CD8-positive, alpha-beta T cell (primary cell): ENCODE measurements at regions of chr12 and their contacts with region 1.

Region 1: GRCh38 chr12:110888256-110888991 is 32.0 kb downstream of the MYL2 start:
- DNase-seq: no peak
- ATAC-seq: no peak
- H3K4me3 ChIP-seq: no peak overlapping the region
- H3K4me3 Mint-ChIP-seq: peak overlapping the region; percentile 94
- H3K27ac ChIP-seq: no peak overlapping the region
- H3K27ac Mint-ChIP-seq: no peak overlapping the region
- H3K4me1 ChIP-seq: no peaks in the 10 kb centered on the region
- H3K4me1 Mint-ChIP-seq: peaks cover 4% of the 10 kb centered on the region
- H3K27me3 ChIP-seq: no peaks in the 10 kb centered on the region
- H3K27me3 Mint-ChIP-seq: no peaks in the 10 kb centered on the region
- CTCF ChIP-seq: peak; percentile 48

Region 2: DNA sequence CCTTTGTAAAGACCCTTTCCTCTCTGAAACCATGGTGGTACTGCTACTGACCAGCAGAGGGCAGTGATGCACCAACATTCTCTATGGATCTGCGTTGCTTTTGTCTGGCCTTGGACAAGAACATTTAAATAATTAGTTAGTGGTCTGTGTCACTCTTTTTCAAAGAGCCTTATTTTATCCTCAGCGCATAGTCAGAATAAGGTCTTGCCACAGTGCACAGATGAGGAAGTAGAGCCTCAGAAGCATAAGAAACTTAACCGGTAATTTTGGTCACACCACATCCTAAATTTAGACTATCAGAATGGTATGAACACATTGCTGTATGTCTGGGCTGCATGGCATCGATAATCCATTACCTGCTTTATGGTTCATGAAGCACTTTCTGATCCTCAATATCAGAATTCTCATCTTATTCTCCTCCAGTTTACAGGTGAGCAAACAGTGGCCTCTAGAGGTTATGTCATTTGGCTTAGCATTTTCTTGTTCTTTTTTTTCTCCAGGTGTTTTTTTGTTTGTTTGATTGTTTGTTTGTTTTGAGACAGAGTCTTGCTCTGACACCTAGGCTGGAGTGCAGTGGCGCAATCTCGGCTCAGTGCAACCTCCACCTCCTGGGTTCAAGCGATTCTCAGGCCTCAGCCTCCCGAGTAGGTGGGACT is 788.0 kb before region 1 on chr12:
- CTCF ChIA-PET with region 1: interaction called, 8 read pairs
- POLR2A ChIA-PET with region 1: no interaction called
- intact Hi-C with region 1: loop called in 1 of 2 experiments (anchors 1 kb)
- DNase-seq: peak; percentile 15 to 82 (median 66)
- ATAC-seq: peak; percentile 85
- H3K4me3 ChIP-seq: no peak overlapping the region
- H3K4me3 Mint-ChIP-seq: no peak overlapping the region
- H3K27ac ChIP-seq: peak overlapping the region in 1 of 2 experiments; percentile 21
- H3K27ac Mint-ChIP-seq: peak overlapping the region; percentile 24
- H3K4me1 ChIP-seq: peaks cover 4% of the 10 kb centered on the region
- H3K4me1 Mint-ChIP-seq: peaks cover 7% of the 10 kb centered on the region
- H3K27me3 ChIP-seq: no peaks in the 10 kb centered on the region
- H3K27me3 Mint-ChIP-seq: no peaks in the 10 kb centered on the region
- CTCF ChIP-seq: peak; percentile 99

Region 3: GRCh38 chr12:110468212-110469048 is 420.0 kb before region 1 on chr12 and contains the starts of genes FAM216A and GPN3:
- CTCF ChIA-PET with region 1: no interaction called
- POLR2A ChIA-PET with region 1: no interaction called
- intact Hi-C with region 1: loop called in 1 of 2 experiments (anchors 5 kb)
- DNase-seq: peak; percentile 89 to 98 (median 95)
- ATAC-seq: peak; percentile 89
- H3K4me3 ChIP-seq: peak within 1 kb of the TSS; percentile 90 to 96
- H3K4me3 Mint-ChIP-seq: peak within 1 kb of the TSS; percentile 99
- H3K27ac ChIP-seq: peak within 1 kb of the TSS; percentile 74 to 87
- H3K27ac Mint-ChIP-seq: peak within 1 kb of the TSS; percentile 95
- H3K4me1 ChIP-seq: peaks cover 23% of the 10 kb centered on the region
- H3K4me1 Mint-ChIP-seq: peaks cover 43% of the 10 kb centered on the region
- H3K27me3 ChIP-seq: no peaks in the 10 kb centered on the region
- H3K27me3 Mint-ChIP-seq: no peaks in the 10 kb centered on the region
- CTCF ChIP-seq: no peak
- total RNA-seq, gene FAM216A: 3.5 to 4.5 TPM
- total RNA-seq, gene GPN3: 5.9 to 6.2 TPM

Region 4: GRCh38 chr12:110501752-110502738 is 386.4 kb before region 1 on chr12 and contains the starts of genes RAD9B and VPS29:
- CTCF ChIA-PET with region 1: no interaction called
- POLR2A ChIA-PET with region 1: no interaction called
- intact Hi-C with region 1: loop called in 1 of 2 experiments (anchors 5 kb)
- DNase-seq: peak; percentile 98 to 100 (median 99)
- ATAC-seq: peak; percentile 92
- H3K4me3 ChIP-seq: peak within 1 kb of the TSS; percentile 73 to 79
- H3K4me3 Mint-ChIP-seq: peak within 1 kb of the TSS; percentile 97
- H3K27ac ChIP-seq: peak within 1 kb of the TSS; percentile 74 to 89
- H3K27ac Mint-ChIP-seq: peak within 1 kb of the TSS; percentile 97
- H3K4me1 ChIP-seq: peaks cover 17% of the 10 kb centered on the region
- H3K4me1 Mint-ChIP-seq: peaks cover 38% of the 10 kb centered on the region
- H3K27me3 ChIP-seq: no peaks in the 10 kb centered on the region
- H3K27me3 Mint-ChIP-seq: no peaks in the 10 kb centered on the region
- CTCF ChIP-seq: no peak
- total RNA-seq, gene RAD9B: 0.57 to 1.5 TPM
- total RNA-seq, gene VPS29: 49.6 to 53.5 TPM

Region 5: DNA sequence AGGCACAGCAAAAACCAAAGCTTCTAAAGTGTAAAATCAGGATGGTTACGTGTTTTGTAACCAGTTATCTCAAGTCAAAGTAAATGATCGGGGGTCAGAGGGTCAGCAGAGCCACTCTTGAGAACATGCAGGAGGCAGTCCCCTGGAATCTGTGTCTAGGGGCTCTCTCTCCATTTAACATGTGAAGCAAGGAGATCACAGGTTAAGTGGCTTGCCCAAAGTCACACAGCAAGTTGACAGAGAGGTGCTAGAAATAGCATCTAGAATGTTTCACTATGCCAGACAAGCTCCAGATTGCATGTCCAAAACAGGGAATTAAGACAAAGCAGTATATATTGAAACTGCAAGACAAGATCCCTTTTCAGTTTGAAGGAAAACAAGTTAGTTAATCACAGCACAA is 338.7 kb before region 1 on chr12:
- CTCF ChIA-PET with region 1: no interaction called
- POLR2A ChIA-PET with region 1: no interaction called
- intact Hi-C with region 1: loop called in 1 of 2 experiments (anchors 2 kb)
- DNase-seq: no peak
- ATAC-seq: no peak
- H3K4me3 ChIP-seq: no peak overlapping the region
- H3K4me3 Mint-ChIP-seq: no peak overlapping the region
- H3K27ac ChIP-seq: no peak overlapping the region
- H3K27ac Mint-ChIP-seq: no peak overlapping the region
- H3K4me1 ChIP-seq: no peaks in the 10 kb centered on the region
- H3K4me1 Mint-ChIP-seq: peaks cover 30% of the 10 kb centered on the region
- H3K27me3 ChIP-seq: no peaks in the 10 kb centered on the region
- H3K27me3 Mint-ChIP-seq: no peaks in the 10 kb centered on the region
- CTCF ChIP-seq: no peak

Region 6: GRCh38 chr12:110816248-110816647 is 72.2 kb before region 1 on chr12:
- CTCF ChIA-PET with region 1: no interaction called
- POLR2A ChIA-PET with region 1: no interaction called
- intact Hi-C with region 1: no loop called
- DNase-seq: no peak
- ATAC-seq: no peak
- H3K4me3 ChIP-seq: no peak overlapping the region
- H3K4me3 Mint-ChIP-seq: no peak overlapping the region
- H3K27ac ChIP-seq: no peak overlapping the region
- H3K27ac Mint-ChIP-seq: no peak overlapping the region
- H3K4me1 ChIP-seq: no peaks in the 10 kb centered on the region
- H3K4me1 Mint-ChIP-seq: no peaks in the 10 kb centered on the region
- H3K27me3 ChIP-seq: peaks cover 0 to 3% of the 10 kb centered on the region in 2 experiments
- H3K27me3 Mint-ChIP-seq: peaks cover 4% of the 10 kb centered on the region
- CTCF ChIP-seq: no peak

Region 7: DNA sequence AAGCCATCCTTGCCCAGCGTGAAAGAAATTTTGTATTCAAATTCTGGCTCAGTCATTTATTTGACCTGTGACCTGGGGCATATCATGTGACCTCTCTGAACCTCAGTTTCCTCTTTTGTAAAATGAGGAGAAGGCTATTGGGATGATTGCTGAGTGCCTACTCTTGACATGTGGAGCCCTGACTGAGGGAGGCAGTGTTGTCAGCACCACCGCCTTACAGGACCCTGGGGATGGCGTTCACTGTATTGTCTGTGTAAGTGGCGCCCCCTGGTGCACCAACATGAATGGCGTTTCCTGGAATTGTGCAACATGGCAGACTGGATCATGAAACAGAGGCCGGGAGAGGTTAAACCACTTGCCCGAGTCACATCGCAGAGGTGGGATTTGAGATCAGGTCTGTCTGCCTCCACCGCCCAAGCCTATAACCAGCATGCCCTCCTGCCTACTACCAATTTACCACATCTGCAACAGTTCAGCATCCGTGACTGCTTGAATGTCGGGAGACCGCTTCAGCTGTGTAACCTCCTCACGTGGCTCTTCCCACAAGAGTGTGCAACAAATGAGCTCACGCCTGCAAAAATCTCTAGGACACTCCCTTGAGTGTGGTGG is 61.7 kb before region 1 on chr12:
- CTCF ChIA-PET with region 1: interaction called, 4 read pairs
- POLR2A ChIA-PET with region 1: no interaction called
- intact Hi-C with region 1: loop called (anchors 5 kb)
- DNase-seq: peak; percentile 64 to 85 (median 78)
- ATAC-seq: peak; percentile 95
- H3K4me3 ChIP-seq: no peak overlapping the region
- H3K4me3 Mint-ChIP-seq: peak overlapping the region; percentile 65
- H3K27ac ChIP-seq: no peak overlapping the region
- H3K27ac Mint-ChIP-seq: no peak overlapping the region
- H3K4me1 ChIP-seq: no peaks in the 10 kb centered on the region
- H3K4me1 Mint-ChIP-seq: peaks cover 5% of the 10 kb centered on the region
- H3K27me3 ChIP-seq: no peaks in the 10 kb centered on the region
- H3K27me3 Mint-ChIP-seq: peaks cover 9% of the 10 kb centered on the region
- CTCF ChIP-seq: peak; percentile 80

Region 8: GRCh38 chr12:111181143-111181726 is 292.8 kb after region 1 on chr12:
- CTCF ChIA-PET with region 1: no interaction called
- POLR2A ChIA-PET with region 1: no interaction called
- intact Hi-C with region 1: no loop called
- DNase-seq: peak in 1 of 9 experiments; percentile 11
- ATAC-seq: no peak
- H3K4me3 ChIP-seq: no peak overlapping the region
- H3K4me3 Mint-ChIP-seq: no peak overlapping the region
- H3K27ac ChIP-seq: no peak overlapping the region
- H3K27ac Mint-ChIP-seq: no peak overlapping the region
- H3K4me1 ChIP-seq: no peaks in the 10 kb centered on the region
- H3K4me1 Mint-ChIP-seq: peaks cover 7% of the 10 kb centered on the region
- H3K27me3 ChIP-seq: no peaks in the 10 kb centered on the region
- H3K27me3 Mint-ChIP-seq: peaks cover 42% of the 10 kb centered on the region
- CTCF ChIP-seq: no peak